ENCODE measurements at regions of chr4 and their contacts with region 1.

Region 1: DNA sequence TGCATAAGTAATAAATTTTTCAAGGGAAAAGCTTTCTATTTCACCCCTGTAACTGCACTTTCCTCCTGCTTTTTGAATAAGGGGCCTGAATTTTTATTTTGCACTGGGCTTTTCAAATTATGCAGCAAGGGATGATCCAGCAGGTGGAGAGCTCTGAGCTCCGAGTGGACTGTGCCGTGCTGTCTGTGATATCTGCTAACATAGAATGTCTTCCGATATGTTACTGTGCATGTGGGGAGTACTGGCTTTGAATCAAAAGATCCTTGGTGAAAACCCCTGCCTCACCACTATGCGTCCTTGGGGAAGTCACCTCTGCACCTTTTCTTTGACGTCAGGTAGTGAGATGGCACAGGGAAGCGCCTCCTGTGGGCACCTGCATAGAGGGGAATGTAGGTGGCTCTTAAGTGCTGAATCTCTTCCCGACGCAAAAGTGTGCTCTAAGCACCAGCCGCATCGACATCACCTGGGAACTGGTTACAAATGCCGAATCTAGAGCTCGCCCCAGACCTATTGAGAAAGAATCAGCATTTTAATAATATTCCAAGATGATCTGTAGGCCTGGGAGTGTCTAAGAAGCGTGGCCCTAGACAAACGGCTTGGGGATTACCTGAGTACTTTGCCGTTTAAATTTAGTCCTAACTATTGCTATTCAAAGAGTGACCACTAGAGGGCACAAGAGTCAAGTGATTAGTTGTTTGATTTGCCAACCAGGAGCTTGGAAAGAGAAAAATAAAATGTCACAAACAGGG is 19.2 kb upstream of the WFS1 start:
- DNase-seq: peak; percentile 24
- H3K4me3 ChIP-seq: no peak overlapping the region
- H3K27ac ChIP-seq: no peak overlapping the region
- H3K27me3 ChIP-seq: peaks cover 31% of the 10 kb centered on the region
- CTCF ChIP-seq: peak; percentile 81

Region 2: DNA sequence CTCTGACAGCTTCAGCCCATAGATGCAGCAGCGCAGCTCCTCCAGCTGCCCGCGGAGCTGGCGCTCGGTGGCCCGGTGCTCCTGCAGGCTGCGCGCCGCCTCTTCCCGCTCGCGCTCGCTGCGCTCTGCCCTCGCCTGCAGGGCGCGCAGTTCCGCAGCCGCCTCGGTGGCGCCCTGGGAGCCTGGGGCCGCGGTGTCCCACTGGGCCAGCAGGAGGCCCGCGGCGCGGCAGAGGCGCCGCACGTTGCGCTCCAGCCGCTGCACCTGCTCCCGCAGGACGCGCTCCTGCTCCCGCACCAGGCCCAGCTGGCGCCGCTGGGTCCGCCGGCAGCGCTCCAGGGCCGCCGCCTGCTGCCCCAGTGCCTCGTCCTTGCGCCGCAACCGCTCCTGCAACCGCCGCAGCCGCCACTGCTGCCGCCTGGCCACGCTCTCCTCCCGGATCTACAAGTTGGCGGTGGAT is 242.3 kb before region 1 on chr4:
- CTCF ChIA-PET with region 1: no interaction called
- POLR2A ChIA-PET with region 1: no interaction called
- DNase-seq: no peak
- H3K4me3 ChIP-seq: no peak overlapping the region
- H3K27ac ChIP-seq: no peak overlapping the region
- H3K27me3 ChIP-seq: peaks cover 2% of the 10 kb centered on the region
- CTCF ChIP-seq: no peak

Region 3: DNA sequence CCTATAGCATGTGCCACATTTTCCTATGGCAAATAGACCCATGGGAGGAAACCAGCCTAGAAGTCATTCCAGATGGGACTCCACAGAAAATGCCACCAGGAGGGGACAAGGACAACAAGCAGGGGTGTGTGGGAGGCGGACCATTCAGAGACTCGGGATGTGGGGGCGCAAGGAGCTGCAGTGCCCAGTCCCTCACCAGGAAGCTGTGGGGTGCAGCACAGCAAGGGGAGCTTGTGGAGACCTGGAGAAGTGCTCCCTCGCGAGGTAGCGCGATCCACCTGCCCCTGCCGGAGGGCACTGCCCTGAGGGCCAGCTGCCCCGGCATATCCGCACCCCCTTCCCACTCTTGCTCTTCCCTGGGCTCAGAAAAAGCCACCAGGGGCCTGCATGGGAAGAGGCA is 186.7 kb before region 1 on chr4:
- CTCF ChIA-PET with region 1: no interaction called
- POLR2A ChIA-PET with region 1: no interaction called
- DNase-seq: no peak
- H3K4me3 ChIP-seq: no peak overlapping the region
- H3K27ac ChIP-seq: no peak overlapping the region
- H3K27me3 ChIP-seq: no peaks in the 10 kb centered on the region
- CTCF ChIP-seq: no peak

Region 4: GRCh38 chr4:6269616-6270511 is 19.5 kb after region 1 on chr4 and contains the start of gene WFS1:
- CTCF ChIA-PET with region 1: interaction called, 97 read pairs
- POLR2A ChIA-PET with region 1: no interaction called
- DNase-seq: peak; percentile 95
- H3K4me3 ChIP-seq: peak within 1 kb of the TSS; percentile 82
- H3K27ac ChIP-seq: no peak within 1 kb of the TSS
- H3K27me3 ChIP-seq: peaks cover 11% of the 10 kb centered on the region
- CTCF ChIP-seq: no peak
- polyA plus RNA-seq, gene WFS1: 46.8 and 64.6 TPM in 2 replicates

Region 5: GRCh38 chr4:6316461-6317003 is 66.1 kb after region 1 on chr4:
- CTCF ChIA-PET with region 1: interaction called, 563 read pairs
- POLR2A ChIA-PET with region 1: no interaction called
- DNase-seq: no peak
- H3K4me3 ChIP-seq: no peak overlapping the region
- H3K27ac ChIP-seq: no peak overlapping the region
- H3K27me3 ChIP-seq: peaks cover 20% of the 10 kb centered on the region
- CTCF ChIP-seq: no peak

Region 6: GRCh38 chr4:6343950-6344408 is 93.6 kb after region 1 on chr4:
- CTCF ChIA-PET with region 1: interaction called, 36 read pairs
- POLR2A ChIA-PET with region 1: no interaction called
- DNase-seq: peak; percentile 18
- H3K4me3 ChIP-seq: no peak overlapping the region
- H3K27ac ChIP-seq: no peak overlapping the region
- H3K27me3 ChIP-seq: peaks cover 3% of the 10 kb centered on the region
- CTCF ChIP-seq: no peak

Region 7: GRCh38 chr4:6582889-6583490 is 332.6 kb after region 1 on chr4:
- CTCF ChIA-PET with region 1: no interaction called
- POLR2A ChIA-PET with region 1: no interaction called
- DNase-seq: no peak
- H3K4me3 ChIP-seq: no peak overlapping the region
- H3K27ac ChIP-seq: no peak overlapping the region
- H3K27me3 ChIP-seq: no peaks in the 10 kb centered on the region
- CTCF ChIP-seq: no peak

Measured in AG04450 (cell line).